ENCODE measurements at regions of chr3 and their contacts with region 1.

Region 1: DNA sequence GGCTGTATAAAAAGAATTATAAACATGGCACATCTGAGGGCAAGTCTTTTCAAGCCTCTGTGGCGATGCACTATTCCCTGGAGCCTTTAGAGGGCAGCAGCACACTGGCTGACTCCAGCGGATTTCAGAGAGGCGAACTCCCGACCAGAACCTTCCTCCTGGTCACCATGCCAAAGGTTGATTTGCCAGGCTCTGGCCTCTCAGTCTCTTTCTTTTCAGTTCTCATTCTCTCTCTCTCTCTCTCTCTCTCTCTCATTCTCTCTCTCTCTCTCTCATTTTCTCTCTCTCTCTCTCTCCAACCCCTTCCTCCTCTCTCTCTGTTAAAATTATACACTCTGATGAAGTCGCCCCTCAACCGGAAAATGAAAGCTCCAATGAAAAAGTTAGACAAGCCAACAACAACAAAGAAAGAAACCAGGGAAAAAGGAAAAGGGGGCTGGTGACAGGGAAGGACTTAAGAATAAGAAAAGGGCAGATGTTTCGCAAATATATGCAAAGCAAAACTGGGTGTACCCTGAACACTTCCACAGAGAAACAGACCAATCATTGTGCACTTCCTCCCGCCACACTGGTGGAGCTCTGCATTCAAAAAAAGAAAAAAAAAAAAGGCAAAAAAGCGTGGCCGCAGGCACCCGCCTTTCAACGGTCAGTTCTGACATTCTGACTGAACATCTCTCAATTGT is 90.2 kb downstream of the TIGIT start:
- DNase-seq: peak; percentile 73
- ATAC-seq: peak; percentile 91
- H3K4me3 ChIP-seq: peak overlapping the region in 4 of 5 experiments; percentile 26 to 58 (median 45)
- H3K4me3 Mint-ChIP-seq: peak overlapping the region; percentile 75
- H3K27ac ChIP-seq: peak overlapping the region in 1 of 2 donors; percentile 67
- H3K27ac Mint-ChIP-seq: peak overlapping the region; percentile 38
- H3K4me1 ChIP-seq: peaks cover 4 to 11% of the 10 kb centered on the region in 2 donors
- H3K4me1 Mint-ChIP-seq: peaks cover 2% of the 10 kb centered on the region
- H3K27me3 ChIP-seq: no peaks in the 10 kb centered on the region
- H3K27me3 Mint-ChIP-seq: no peaks in the 10 kb centered on the region
- CTCF ChIP-seq: peak; percentile 92

Region 2: GRCh38 chr3:114336122-114336697 is 47.8 kb before region 1 on chr3:
- CTCF ChIA-PET with region 1: no interaction called
- POLR2A ChIA-PET with region 1: no interaction called
- intact Hi-C with region 1: no loop called
- DNase-seq: peak; percentile 25
- ATAC-seq: no peak
- H3K4me3 ChIP-seq: no peak overlapping the region
- H3K4me3 Mint-ChIP-seq: no peak overlapping the region
- H3K27ac ChIP-seq: no peak overlapping the region
- H3K27ac Mint-ChIP-seq: no peak overlapping the region
- H3K4me1 ChIP-seq: peaks cover 14% of the 10 kb centered on the region in 2 donors
- H3K4me1 Mint-ChIP-seq: peaks cover 31% of the 10 kb centered on the region
- H3K27me3 ChIP-seq: no peaks in the 10 kb centered on the region
- H3K27me3 Mint-ChIP-seq: no peaks in the 10 kb centered on the region
- CTCF ChIP-seq: peak; percentile 56

Region 3: DNA sequence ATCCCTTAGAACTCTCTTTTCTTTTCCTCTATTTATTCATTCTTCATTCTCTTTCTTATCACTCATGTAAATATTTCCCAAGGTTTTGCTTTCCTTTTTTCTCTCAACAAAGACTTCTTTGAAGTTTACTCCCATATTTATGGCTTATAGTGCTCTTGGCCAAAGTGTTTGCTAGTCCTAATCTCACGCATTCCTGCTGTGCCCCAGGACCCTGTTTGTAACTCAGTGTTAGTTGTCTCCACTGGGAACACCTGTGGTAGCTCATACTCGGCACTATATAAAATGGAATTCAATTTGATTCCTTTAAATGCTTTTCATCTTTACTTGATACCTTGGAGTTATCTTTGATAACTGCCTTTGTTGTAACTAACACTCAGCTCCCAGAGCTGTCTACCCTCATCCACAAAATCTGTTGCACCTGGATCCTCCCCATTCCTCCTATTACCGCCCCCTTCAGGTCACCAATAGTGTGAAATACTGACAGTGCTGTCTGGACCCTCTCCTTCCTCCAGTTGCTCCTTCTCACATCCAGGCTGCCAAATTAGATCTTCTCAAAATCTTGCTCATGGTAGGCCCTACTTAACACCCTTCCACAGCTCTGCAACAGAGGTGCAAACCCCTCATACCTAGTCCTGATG is 13.4 kb before region 1 on chr3:
- CTCF ChIA-PET with region 1: interaction called, 15 read pairs
- POLR2A ChIA-PET with region 1: no interaction called
- intact Hi-C with region 1: no loop called
- DNase-seq: no peak
- ATAC-seq: no peak
- H3K4me3 ChIP-seq: no peak overlapping the region
- H3K4me3 Mint-ChIP-seq: no peak overlapping the region
- H3K27ac ChIP-seq: no peak overlapping the region
- H3K27ac Mint-ChIP-seq: no peak overlapping the region
- H3K4me1 ChIP-seq: no peaks in the 10 kb centered on the region
- H3K4me1 Mint-ChIP-seq: peaks cover 1% of the 10 kb centered on the region
- H3K27me3 ChIP-seq: no peaks in the 10 kb centered on the region
- H3K27me3 Mint-ChIP-seq: no peaks in the 10 kb centered on the region
- CTCF ChIP-seq: no peak

Region 4: GRCh38 chr3:114447545-114447944 is 63.5 kb after region 1 on chr3:
- CTCF ChIA-PET with region 1: interaction called, 44 read pairs
- POLR2A ChIA-PET with region 1: no interaction called
- intact Hi-C with region 1: loop called (anchors 1 kb)
- DNase-seq: peak; percentile 27
- ATAC-seq: peak; percentile 10
- H3K4me3 ChIP-seq: no peak overlapping the region
- H3K4me3 Mint-ChIP-seq: peak overlapping the region; percentile 61
- H3K27ac ChIP-seq: no peak overlapping the region
- H3K27ac Mint-ChIP-seq: peak overlapping the region; percentile 64
- H3K4me1 ChIP-seq: peaks cover 17 to 19% of the 10 kb centered on the region in 2 donors
- H3K4me1 Mint-ChIP-seq: peaks cover 63% of the 10 kb centered on the region
- H3K27me3 ChIP-seq: no peaks in the 10 kb centered on the region
- H3K27me3 Mint-ChIP-seq: no peaks in the 10 kb centered on the region
- CTCF ChIP-seq: peak; percentile 23

Region 5: DNA sequence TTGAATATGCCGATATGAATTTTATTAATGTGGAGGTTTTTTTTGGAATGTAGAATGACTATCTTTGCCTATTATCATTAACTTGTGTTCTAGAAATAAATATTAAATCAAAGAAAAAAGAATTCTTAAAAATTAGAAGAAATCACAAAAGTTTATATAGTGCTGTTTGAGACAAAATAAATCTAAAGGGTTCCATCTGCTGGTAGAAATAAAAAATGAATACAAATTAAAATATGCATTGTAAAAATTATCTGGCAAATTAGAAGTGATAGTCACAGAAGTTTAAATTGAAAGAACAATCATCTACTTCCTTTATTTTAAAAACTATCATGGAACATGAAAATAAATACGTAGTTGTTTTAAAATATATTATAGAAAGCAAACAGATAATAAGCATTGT is 785.8 kb after region 1 on chr3:
- CTCF ChIA-PET with region 1: interaction called, 3 read pairs
- POLR2A ChIA-PET with region 1: no interaction called
- intact Hi-C with region 1: loop called (anchors 5 kb)
- DNase-seq: no peak
- ATAC-seq: no peak
- H3K4me3 ChIP-seq: no peak overlapping the region
- H3K4me3 Mint-ChIP-seq: no peak overlapping the region
- H3K27ac ChIP-seq: no peak overlapping the region
- H3K27ac Mint-ChIP-seq: no peak overlapping the region
- H3K4me1 ChIP-seq: no peaks in the 10 kb centered on the region
- H3K4me1 Mint-ChIP-seq: peaks cover 11% of the 10 kb centered on the region
- H3K27me3 ChIP-seq: no peaks in the 10 kb centered on the region
- H3K27me3 Mint-ChIP-seq: no peaks in the 10 kb centered on the region
- CTCF ChIP-seq: peak; percentile 69

Region 6: GRCh38 chr3:115245437-115245836 is 861.4 kb after region 1 on chr3:
- CTCF ChIA-PET with region 1: no interaction called
- POLR2A ChIA-PET with region 1: no interaction called
- intact Hi-C with region 1: no loop called
- DNase-seq: no peak
- ATAC-seq: no peak
- H3K4me3 ChIP-seq: no peak overlapping the region
- H3K4me3 Mint-ChIP-seq: no peak overlapping the region
- H3K27ac ChIP-seq: no peak overlapping the region
- H3K27ac Mint-ChIP-seq: no peak overlapping the region
- H3K4me1 ChIP-seq: no peaks in the 10 kb centered on the region
- H3K4me1 Mint-ChIP-seq: no peaks in the 10 kb centered on the region
- H3K27me3 ChIP-seq: no peaks in the 10 kb centered on the region
- H3K27me3 Mint-ChIP-seq: peaks cover 11% of the 10 kb centered on the region
- CTCF ChIP-seq: no peak

Region 7: GRCh38 chr3:115819785-115820384 is 1435.9 kb after region 1 on chr3:
- CTCF ChIA-PET with region 1: no interaction called
- POLR2A ChIA-PET with region 1: no interaction called
- intact Hi-C with region 1: loop called (anchors 10 kb)
- DNase-seq: peak; percentile 84
- ATAC-seq: peak; percentile 90
- H3K4me3 ChIP-seq: no peak overlapping the region
- H3K4me3 Mint-ChIP-seq: no peak overlapping the region
- H3K27ac ChIP-seq: no peak overlapping the region
- H3K27ac Mint-ChIP-seq: no peak overlapping the region
- H3K4me1 ChIP-seq: no peaks in the 10 kb centered on the region
- H3K4me1 Mint-ChIP-seq: no peaks in the 10 kb centered on the region
- H3K27me3 ChIP-seq: no peaks in the 10 kb centered on the region
- H3K27me3 Mint-ChIP-seq: no peaks in the 10 kb centered on the region
- CTCF ChIP-seq: peak; percentile 99

Measured in B cell (primary cell).